ENCODE measurements at regions of chr11 and their contacts with region 1.

Region 1: GRCh38 chr11:236774-237767 is at the start of gene PSMD13:
- DNase-seq: peak; percentile 81 to 84 (median 84)
- H3K4me3 ChIP-seq: peak within 1 kb of the TSS; percentile 93 to 99 (median 96)
- H3K4me3 Mint-ChIP-seq: peak within 1 kb of the TSS; percentile 96 to 97
- H3K27ac ChIP-seq: peak within 1 kb of the TSS; percentile 97 to 98
- H3K27ac Mint-ChIP-seq: peak within 1 kb of the TSS; percentile 99 to 100 (median 100)
- H3K4me1 ChIP-seq: peaks cover 20 to 23% of the 10 kb centered on the region in 2 donors
- H3K4me1 Mint-ChIP-seq: peaks cover 24% of the 10 kb centered on the region
- H3K27me3 ChIP-seq: no peaks in the 10 kb centered on the region
- H3K27me3 Mint-ChIP-seq: peaks cover 0 to 4% (median 1%) of the 10 kb centered on the region in 3 donors
- CTCF ChIP-seq: no peak
- polyA plus RNA-seq, gene PSMD13: 136 to 272 (median 218) TPM

Region 2: GRCh38 chr11:199782-200181 is 37.3 kb before region 1 on chr11:
- intact Hi-C with region 1: loop called in 1 of 2 experiments (anchors 5 kb)
- DNase-seq: no peak
- H3K4me3 ChIP-seq: no peak overlapping the region
- H3K4me3 Mint-ChIP-seq: no peak overlapping the region
- H3K27ac ChIP-seq: no peak overlapping the region
- H3K27ac Mint-ChIP-seq: no peak overlapping the region
- H3K4me1 ChIP-seq: peaks cover 21 to 28% of the 10 kb centered on the region in 2 donors
- H3K4me1 Mint-ChIP-seq: peaks cover 29% of the 10 kb centered on the region
- H3K27me3 ChIP-seq: no peaks in the 10 kb centered on the region
- H3K27me3 Mint-ChIP-seq: peaks cover 4 to 9% (median 5%) of the 10 kb centered on the region in 3 donors
- CTCF ChIP-seq: no peak

Region 3: GRCh38 chr11:207208-207862 is 29.7 kb before region 1 on chr11 and contains the starts of genes BET1L and RIC8A:
- intact Hi-C with region 1: loop called (anchors 1 to 5 kb)
- DNase-seq: peak; percentile 98 to 99 (median 99)
- H3K4me3 ChIP-seq: peak within 1 kb of the TSS; percentile 78 to 98 (median 81)
- H3K4me3 Mint-ChIP-seq: peak within 1 kb of the TSS; percentile 97 to 98
- H3K27ac ChIP-seq: peak within 1 kb of the TSS; percentile 98 to 100
- H3K27ac Mint-ChIP-seq: peak within 1 kb of the TSS; percentile 99 to 100 (median 100)
- H3K4me1 ChIP-seq: peaks cover 39 to 59% of the 10 kb centered on the region in 2 donors
- H3K4me1 Mint-ChIP-seq: peaks cover 53% of the 10 kb centered on the region
- H3K27me3 ChIP-seq: no peaks in the 10 kb centered on the region
- H3K27me3 Mint-ChIP-seq: peaks cover 2 to 5% (median 4%) of the 10 kb centered on the region in 3 donors
- CTCF ChIP-seq: no peak
- polyA plus RNA-seq, gene BET1L: 9.5 to 37.3 (median 29.3) TPM
- polyA plus RNA-seq, gene RIC8A: 51.1 to 79.1 (median 56.5) TPM

Region 4: DNA sequence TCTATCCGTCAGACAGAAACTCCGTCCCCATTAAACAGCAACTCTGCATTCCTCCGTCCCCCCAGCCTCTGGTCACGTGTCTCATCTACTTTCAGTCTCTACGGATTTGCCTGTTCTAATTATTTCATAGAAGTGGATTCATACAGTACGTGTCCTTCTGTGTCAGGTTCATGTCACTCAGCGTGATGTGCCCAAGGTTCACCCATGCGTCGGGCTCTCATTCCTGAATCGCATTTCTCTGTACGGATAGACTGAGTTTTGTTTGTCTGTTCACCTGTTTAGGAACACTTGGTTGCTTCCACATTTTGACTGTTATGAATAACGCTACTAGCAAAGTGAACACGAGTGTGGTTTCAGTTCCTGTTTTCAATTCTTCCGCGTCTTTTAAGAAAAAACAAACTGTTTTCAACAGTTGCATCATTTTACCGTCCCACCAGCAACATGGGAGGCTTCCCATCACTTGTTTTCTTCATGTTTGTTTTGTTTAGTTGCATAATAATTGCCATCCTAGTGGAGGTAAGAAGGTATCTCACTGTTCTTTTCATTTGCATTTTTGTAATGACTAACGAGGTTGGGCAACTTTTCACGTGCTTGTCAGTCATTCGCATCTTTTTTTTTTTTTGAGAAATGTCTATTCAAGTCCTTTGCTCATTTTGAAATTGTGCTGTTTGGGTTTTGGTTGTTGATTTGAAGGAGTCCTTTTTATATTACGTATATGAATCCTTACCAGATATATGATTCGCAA is 32.2 kb after region 1 on chr11:
- intact Hi-C with region 1: loop called (anchors 2 kb)
- DNase-seq: peak; percentile 96 to 99 (median 97)
- H3K4me3 ChIP-seq: peak overlapping the region; percentile 47 to 77 (median 55)
- H3K4me3 Mint-ChIP-seq: peak overlapping the region; percentile 84 to 99
- H3K27ac ChIP-seq: peak overlapping the region; percentile 99 to 100
- H3K27ac Mint-ChIP-seq: peak overlapping the region; percentile 97 to 100 (median 99)
- H3K4me1 ChIP-seq: peaks cover 37% of the 10 kb centered on the region in 2 donors
- H3K4me1 Mint-ChIP-seq: peaks cover 35% of the 10 kb centered on the region
- H3K27me3 ChIP-seq: no peaks in the 10 kb centered on the region
- H3K27me3 Mint-ChIP-seq: peaks cover 0 to 9% (median 2%) of the 10 kb centered on the region in 3 donors
- CTCF ChIP-seq: peak; percentile 55

Region 5: GRCh38 chr11:288328-289144 is 51.5 kb after region 1 on chr11 and contains the start of gene PGGHG:
- intact Hi-C with region 1: no loop called
- DNase-seq: peak in 2 of 3 donors; percentile 46 to 63
- H3K4me3 ChIP-seq: peak within 1 kb of the TSS; percentile 48 to 70 (median 55)
- H3K4me3 Mint-ChIP-seq: peak within 1 kb of the TSS; percentile 82 to 95
- H3K27ac ChIP-seq: no peak within 1 kb of the TSS
- H3K27ac Mint-ChIP-seq: peak within 1 kb of the TSS in 3 of 7 donors; percentile 26 to 84 (median 49)
- H3K4me1 ChIP-seq: peaks cover 14 to 20% of the 10 kb centered on the region in 2 donors
- H3K4me1 Mint-ChIP-seq: peaks cover 17% of the 10 kb centered on the region
- H3K27me3 ChIP-seq: peaks cover 0 to 25% of the 10 kb centered on the region in 2 donors
- H3K27me3 Mint-ChIP-seq: peaks cover 29 to 56% (median 36%) of the 10 kb centered on the region in 3 donors
- CTCF ChIP-seq: no peak
- polyA plus RNA-seq, gene PGGHG: 1.6 to 82.9 (median 2.1) TPM

Region 6: DNA sequence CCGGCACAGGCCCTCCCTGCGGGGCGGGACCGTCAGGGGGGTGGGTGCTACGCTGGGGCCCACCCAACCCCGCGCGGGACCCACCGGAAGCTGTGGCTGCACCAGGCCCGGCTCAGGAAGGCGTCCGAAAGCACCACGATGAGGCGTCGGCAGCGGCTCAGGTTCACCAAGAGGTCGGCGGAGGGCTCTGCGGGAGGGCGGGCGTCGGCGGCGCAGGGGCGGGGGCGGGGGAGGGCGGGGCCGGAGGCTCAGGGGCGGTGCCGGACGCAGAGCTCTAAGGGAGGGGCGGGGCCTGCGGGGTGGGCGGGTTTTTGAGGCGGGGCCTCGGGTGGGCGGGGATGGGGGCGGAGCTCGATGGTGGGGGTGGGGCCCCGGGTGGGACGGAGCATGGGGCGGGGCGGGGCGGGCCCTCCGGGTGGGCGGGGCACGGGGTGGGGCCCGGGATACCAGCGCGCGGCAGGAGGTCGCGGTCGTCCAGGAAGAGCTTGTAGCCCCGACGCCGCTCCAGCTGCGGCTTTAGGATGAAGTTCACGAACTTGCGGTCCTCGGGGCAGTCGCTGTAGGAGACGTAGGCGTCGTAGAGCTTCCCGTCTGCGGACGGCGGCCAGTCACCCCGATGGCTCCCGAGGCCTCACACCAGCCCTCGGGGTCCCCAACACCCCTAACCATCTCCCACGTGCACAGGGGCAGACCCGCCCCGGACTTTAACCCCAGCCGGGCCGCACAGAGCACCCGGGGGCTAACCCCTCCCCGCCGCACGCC is 170.1 kb after region 1 on chr11:
- intact Hi-C with region 1: loop called in 1 of 2 experiments (anchors 5 kb)
- DNase-seq: peak; percentile 76 to 90 (median 87)
- H3K4me3 ChIP-seq: peak overlapping the region; percentile 25 to 75 (median 48)
- H3K4me3 Mint-ChIP-seq: peak overlapping the region; percentile 31 to 59
- H3K27ac ChIP-seq: peak overlapping the region; percentile 25 to 73
- H3K27ac Mint-ChIP-seq: peak overlapping the region in 4 of 7 donors; percentile 32 to 41 (median 38)
- H3K4me1 ChIP-seq: peaks cover 15 to 21% of the 10 kb centered on the region in 2 donors
- H3K4me1 Mint-ChIP-seq: peaks cover 7% of the 10 kb centered on the region
- H3K27me3 ChIP-seq: no peaks in the 10 kb centered on the region
- H3K27me3 Mint-ChIP-seq: peaks cover 0 to 12% (median 1%) of the 10 kb centered on the region in 3 donors
- CTCF ChIP-seq: no peak

Measured in CD14-positive monocyte (primary cell).